Posterior cingulate gyrus (tissue), 11 donors: ENCODE measurements at regions of chr9 and their contacts with region 1.

Region 1: GRCh38 chr9:33225319-33226149 is 14.4 kb upstream of the SPINK4 start:
- DNase-seq: peak in 5 of 10 donors; percentile 19 to 67 (median 60)

Region 2: GRCh38 chr9:33139421-33140228 is 85.9 kb before region 1 on chr9:
- intact Hi-C with region 1: loop called (anchors 10 kb)
- DNase-seq: peak in 4 of 10 donors; percentile 29 to 90 (median 60)